Aorta (tissue), 5 donors: ENCODE measurements at regions of chr5 and their contacts with region 1.

Region 1: DNA sequence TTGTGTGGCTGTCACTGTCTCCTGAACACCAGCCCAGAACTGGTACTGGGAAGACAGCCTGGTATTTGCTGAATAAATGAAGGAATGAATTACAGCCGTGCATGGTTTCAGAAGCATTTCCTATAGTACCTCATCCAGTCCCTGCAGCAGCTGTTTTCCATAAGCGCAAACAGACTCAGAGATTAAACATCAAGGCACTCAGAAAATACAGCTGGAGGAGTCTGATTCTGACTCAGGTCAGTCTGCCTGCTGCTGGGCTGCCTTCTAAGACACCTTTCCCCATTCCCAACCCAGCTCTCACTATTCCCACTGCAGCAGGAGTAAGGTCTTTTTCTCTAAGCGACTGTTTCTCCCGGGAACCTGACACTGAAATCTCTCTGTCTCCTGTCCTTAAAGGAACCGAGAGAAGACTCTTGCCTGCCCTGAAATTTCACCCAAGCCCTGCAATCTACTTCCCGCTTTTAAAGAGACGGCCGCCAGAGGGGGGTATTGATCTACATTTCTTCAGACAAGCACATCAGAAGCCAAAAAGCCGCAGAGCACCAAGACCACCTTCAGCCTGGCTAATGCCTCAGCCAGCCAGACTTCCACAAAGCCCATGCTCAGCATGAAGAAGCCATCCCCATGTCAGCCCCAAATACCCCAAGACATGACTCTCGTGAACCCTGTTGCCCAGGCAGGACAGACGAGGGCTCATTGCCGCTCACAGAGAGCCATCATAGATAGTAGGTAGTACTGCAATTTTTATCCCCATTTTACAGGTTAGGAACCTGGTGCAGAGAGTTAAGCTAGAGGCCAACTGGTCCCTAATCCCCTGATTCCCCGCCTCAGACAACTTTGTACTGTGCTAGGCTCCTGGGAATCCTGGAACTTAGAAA is 5.4 kb upstream of the FOXI1 start:
- DNase-seq: peak; percentile 82 to 86
- ATAC-seq: peak; percentile 66
- H3K4me3 ChIP-seq: no peak overlapping the region
- H3K27ac ChIP-seq: no peak overlapping the region
- H3K4me1 ChIP-seq: no peaks in the 10 kb centered on the region
- H3K27me3 ChIP-seq: no peaks in the 10 kb centered on the region

Region 2: GRCh38 chr5:170151097-170151831 is 51.0 kb after region 1 on chr5:
- intact Hi-C with region 1: no loop called
- DNase-seq: peak; percentile 78 to 81
- ATAC-seq: no peak
- H3K4me3 ChIP-seq: no peak overlapping the region
- H3K27ac ChIP-seq: peak overlapping the region in 1 of 2 donors; percentile 3
- H3K4me1 ChIP-seq: no peaks in the 10 kb centered on the region
- H3K27me3 ChIP-seq: no peaks in the 10 kb centered on the region

Region 3: GRCh38 chr5:170183816-170184687 is 83.7 kb after region 1 on chr5:
- intact Hi-C with region 1: loop called (anchors 2 kb)
- DNase-seq: peak in 1 of 2 donors; percentile 70
- ATAC-seq: peak; percentile 76
- H3K4me3 ChIP-seq: no peak overlapping the region
- H3K27ac ChIP-seq: no peak overlapping the region
- H3K4me1 ChIP-seq: no peaks in the 10 kb centered on the region
- H3K27me3 ChIP-seq: no peaks in the 10 kb centered on the region